Breast epithelium (tissue), 4 donors: ENCODE measurements at regions of chr16 and their contacts with region 1.

Region 1: DNA sequence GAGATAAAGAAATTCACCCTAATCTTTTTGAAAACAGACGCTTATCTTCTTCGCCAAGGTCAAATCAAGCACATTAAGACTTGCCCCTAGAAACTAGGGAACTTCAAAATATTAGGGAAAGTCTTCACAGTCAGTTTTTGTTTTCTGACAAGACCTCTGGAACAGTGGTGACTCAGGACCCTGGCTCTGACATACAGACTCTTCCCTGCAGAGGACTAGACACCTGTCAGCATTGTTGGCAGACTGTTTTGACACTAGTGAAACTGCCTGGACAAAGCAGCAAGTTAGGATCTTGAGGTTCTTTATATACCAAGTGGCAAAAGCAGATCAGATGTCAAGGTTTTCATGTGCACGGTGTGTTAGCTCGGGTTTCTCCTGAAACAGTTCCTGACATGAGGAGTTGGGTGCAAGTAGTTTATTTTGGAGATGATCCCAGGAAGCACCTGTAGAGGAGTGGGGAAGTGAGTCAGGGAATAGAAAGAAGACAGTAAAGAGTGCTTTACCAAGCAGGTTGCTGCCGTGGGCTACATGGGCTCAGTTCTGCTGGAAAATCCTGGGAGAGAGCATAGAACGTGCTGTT is 182.0 kb upstream of the IRX5 start:
- DNase-seq: no peak
- H3K4me3 ChIP-seq: no peak overlapping the region
- H3K27ac ChIP-seq: no peak overlapping the region
- H3K4me1 ChIP-seq: no peaks in the 10 kb centered on the region
- H3K27me3 ChIP-seq: no peaks in the 10 kb centered on the region
- CTCF ChIP-seq: no peak
- POLR2A ChIP-seq: no peak

Region 2: GRCh38 chr16:53356478-53357200 is 1392.1 kb before region 1 on chr16:
- intact Hi-C with region 1: no loop called
- DNase-seq: no peak
- H3K4me3 ChIP-seq: no peak overlapping the region
- H3K27ac ChIP-seq: no peak overlapping the region
- H3K4me1 ChIP-seq: no peaks in the 10 kb centered on the region
- H3K27me3 ChIP-seq: peaks cover 0 to 3% of the 10 kb centered on the region in 2 donors
- CTCF ChIP-seq: no peak
- POLR2A ChIP-seq: no peak

Region 3: GRCh38 chr16:56667581-56668571 is 1919.2 kb after region 1 on chr16 and contains the start of gene MT1G:
- intact Hi-C with region 1: loop called (anchors 10 kb)
- DNase-seq: peak in 1 of 2 donors; percentile 64
- H3K4me3 ChIP-seq: peak within 1 kb of the TSS in 2 of 3 donors; percentile 40 to 58
- H3K27ac ChIP-seq: peak within 1 kb of the TSS in 1 of 2 donors; percentile 48
- H3K4me1 ChIP-seq: no peaks in the 10 kb centered on the region
- H3K27me3 ChIP-seq: peaks cover 1 to 21% of the 10 kb centered on the region in 2 donors
- CTCF ChIP-seq: no peak
- POLR2A ChIP-seq: no peak
- total RNA-seq, gene MT1G: 20.0 to 224 (median 48.3) TPM